PC-9 (cell line): ENCODE measurements at regions of chr2 and their contacts with region 1.

Region 1: GRCh38 chr2:48471048-48471474 is 58.9 kb upstream of the STON1 start:
- DNase-seq: peak; percentile 22 to 65
- H3K4me3 ChIP-seq: no peak overlapping the region
- H3K27ac ChIP-seq: no peak overlapping the region
- H3K4me1 ChIP-seq: no peaks in the 10 kb centered on the region
- H3K27me3 ChIP-seq: no peaks in the 10 kb centered on the region
- CTCF ChIP-seq: peak; percentile 92

Region 2: GRCh38 chr2:48312126-48312525 is 158.9 kb before region 1 on chr2:
- CTCF ChIA-PET with region 1: interaction called, 22 read pairs
- POLR2A ChIA-PET with region 1: no interaction called
- intact Hi-C with region 1: no loop called
- DNase-seq: peak; percentile 20 to 91
- H3K4me3 ChIP-seq: 0 out of 2 replicates have a peak overlapping the region, but pooled peaks have one; percentile 4
- H3K27ac ChIP-seq: peak overlapping the region; percentile 71
- H3K4me1 ChIP-seq: peaks cover 42% of the 10 kb centered on the region
- H3K27me3 ChIP-seq: no peaks in the 10 kb centered on the region
- CTCF ChIP-seq: no peak

Region 3: DNA sequence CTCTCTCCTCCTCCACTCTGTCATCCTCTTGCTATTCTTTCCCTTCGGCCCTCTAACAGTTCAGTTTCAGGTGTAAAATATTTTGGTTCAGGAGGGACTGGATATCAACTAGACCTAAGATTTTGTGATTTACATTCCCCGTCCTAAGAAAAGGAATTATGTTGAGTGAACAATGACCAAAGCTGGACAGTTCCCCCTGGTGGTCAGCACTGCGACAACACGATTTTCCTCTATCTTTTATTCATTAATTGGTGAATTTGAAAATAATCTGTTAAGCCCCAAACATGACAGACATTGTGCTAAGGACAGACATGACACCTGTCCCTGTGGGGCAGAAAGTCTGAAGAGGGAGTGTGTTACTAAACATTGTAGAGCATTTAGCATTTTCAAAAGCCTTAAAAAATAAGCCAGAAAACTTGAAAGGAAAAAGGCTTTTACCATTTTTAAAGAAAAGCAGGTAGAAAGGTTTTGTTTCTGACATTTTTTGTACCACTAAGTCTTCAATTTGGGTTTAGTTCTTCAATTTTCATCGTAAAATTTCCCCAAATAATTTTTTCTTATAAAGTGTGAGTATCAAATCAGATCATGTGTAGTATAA is 118.2 kb after region 1 on chr2:
- CTCF ChIA-PET with region 1: interaction called, 3 read pairs
- POLR2A ChIA-PET with region 1: no interaction called
- intact Hi-C with region 1: loop called (anchors 10 kb)
- DNase-seq: peak in 1 of 2 experiments; percentile 43
- H3K4me3 ChIP-seq: no peak overlapping the region
- H3K27ac ChIP-seq: no peak overlapping the region
- H3K4me1 ChIP-seq: no peaks in the 10 kb centered on the region
- H3K27me3 ChIP-seq: no peaks in the 10 kb centered on the region
- CTCF ChIP-seq: peak; percentile 95

Region 4: GRCh38 chr2:48940606-48941005 is 469.5 kb after region 1 on chr2:
- CTCF ChIA-PET with region 1: no interaction called
- POLR2A ChIA-PET with region 1: no interaction called
- intact Hi-C with region 1: no loop called
- DNase-seq: no peak
- H3K4me3 ChIP-seq: no peak overlapping the region
- H3K27ac ChIP-seq: no peak overlapping the region
- H3K4me1 ChIP-seq: no peaks in the 10 kb centered on the region
- H3K27me3 ChIP-seq: peaks cover 47% of the 10 kb centered on the region
- CTCF ChIP-seq: no peak